Transverse colon (tissue), 4 donors: ENCODE measurements at regions of chr7 and their contacts with region 1.

Region 1: DNA sequence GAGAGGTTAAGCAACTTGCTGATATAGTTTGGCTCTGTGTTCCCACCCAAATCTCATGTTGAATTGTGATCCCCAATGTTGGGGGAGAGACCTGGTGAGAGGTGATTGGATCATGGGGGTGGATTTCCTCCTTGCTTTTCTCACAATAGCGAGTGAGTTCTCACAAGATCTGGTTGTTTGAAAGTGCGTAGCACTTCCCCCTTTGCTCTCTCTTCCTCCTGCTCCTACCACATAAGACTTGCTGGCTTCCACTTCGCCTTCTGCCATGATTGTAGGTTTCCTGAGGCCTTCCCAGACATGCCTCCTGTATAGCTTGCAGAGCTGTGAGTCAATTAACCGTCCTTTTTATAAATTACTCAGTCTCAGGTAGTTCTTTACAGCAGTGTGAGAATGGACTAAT is 13.5 kb upstream of the ZNRF2 start:
- DNase-seq: no peak
- H3K4me3 ChIP-seq: no peak overlapping the region
- H3K27ac ChIP-seq: no peak overlapping the region
- H3K4me1 ChIP-seq: peaks cover 0 to 6% (median 0%) of the 10 kb centered on the region in 4 donors
- H3K27me3 ChIP-seq: no peaks in the 10 kb centered on the region
- CTCF ChIP-seq: no peak
- EP300 ChIP-seq: no peak
- POLR2A ChIP-seq: no peak

Region 2: GRCh38 chr7:30412810-30413504 is 142.0 kb after region 1 on chr7:
- in situ Hi-C with region 1: no loop called
- intact Hi-C with region 1: loop called (anchors 5 kb)
- DNase-seq: peak; percentile 32
- H3K4me3 ChIP-seq: no peak overlapping the region
- H3K27ac ChIP-seq: no peak overlapping the region
- H3K4me1 ChIP-seq: no peaks in the 10 kb centered on the region
- H3K27me3 ChIP-seq: no peaks in the 10 kb centered on the region
- CTCF ChIP-seq: peak; percentile 45 to 68 (median 47)
- EP300 ChIP-seq: no peak
- POLR2A ChIP-seq: no peak